Head of caudate nucleus (tissue), 42 donors: ENCODE measurements at regions of chr12 and their contacts with region 1.

Region 1: GRCh38 chr12:34022079-34022830 is at the start of gene ALG10:
- DNase-seq: peak; percentile 93 to 98 (median 96)

Region 2: GRCh38 chr12:32947206-32948067 is 1074.8 kb before region 1 on chr12:
- intact Hi-C with region 1: loop called (anchors 10 kb)
- DNase-seq: peak in 2 of 42 donors; percentile 6 to 22